ENCODE measurements at regions of chr2 and their contacts with region 1.

Region 1: GRCh38 chr2:159595410-159596046 is 20.8 kb downstream of the BAZ2B start:
- DNase-seq: no peak
- H3K4me3 ChIP-seq: no peak overlapping the region
- H3K27ac ChIP-seq: no peak overlapping the region
- H3K4me1 ChIP-seq: no peaks in the 10 kb centered on the region
- H3K27me3 ChIP-seq: no peaks in the 10 kb centered on the region
- CTCF ChIP-seq: no peak
- POLR2A ChIP-seq: no peak

Region 2: GRCh38 chr2:159209341-159210306 is 385.9 kb before region 1 on chr2:
- intact Hi-C with region 1: loop called (anchors 5 kb)
- DNase-seq: peak in 1 of 2 donors; percentile 30
- H3K4me3 ChIP-seq: no peak overlapping the region
- H3K27ac ChIP-seq: no peak overlapping the region
- H3K4me1 ChIP-seq: no peaks in the 10 kb centered on the region
- H3K27me3 ChIP-seq: no peaks in the 10 kb centered on the region
- CTCF ChIP-seq: no peak
- POLR2A ChIP-seq: no peak

Region 3: GRCh38 chr2:160609346-160609745 is 1013.8 kb after region 1 on chr2:
- intact Hi-C with region 1: loop called (anchors 5 kb)
- DNase-seq: no peak
- H3K4me3 ChIP-seq: no peak overlapping the region
- H3K27ac ChIP-seq: no peak overlapping the region
- H3K4me1 ChIP-seq: no peaks in the 10 kb centered on the region
- H3K27me3 ChIP-seq: no peaks in the 10 kb centered on the region
- CTCF ChIP-seq: no peak
- POLR2A ChIP-seq: no peak